H1 (cell line): ENCODE measurements at regions of chr11 and their contacts with region 1.

Region 1: GRCh38 chr11:45332276-45332934 is 46.3 kb upstream of the SYT13 start:
- DNase-seq: peak in 1 of 2 experiments; percentile 68
- H3K4me3 ChIP-seq: no peak overlapping the region
- H3K27ac ChIP-seq: no peak overlapping the region
- H3K4me1 ChIP-seq: no peaks in the 10 kb centered on the region
- H3K27me3 ChIP-seq: no peaks in the 10 kb centered on the region; a peak in 1 of 7 replicates
- CTCF ChIP-seq: peak; percentile 44 to 65 (median 49)
- EP300 ChIP-seq: no peak
- POLR2A ChIP-seq: no peak
- RAD21 ChIP-seq: peak; percentile 80 to 82

Region 2: DNA sequence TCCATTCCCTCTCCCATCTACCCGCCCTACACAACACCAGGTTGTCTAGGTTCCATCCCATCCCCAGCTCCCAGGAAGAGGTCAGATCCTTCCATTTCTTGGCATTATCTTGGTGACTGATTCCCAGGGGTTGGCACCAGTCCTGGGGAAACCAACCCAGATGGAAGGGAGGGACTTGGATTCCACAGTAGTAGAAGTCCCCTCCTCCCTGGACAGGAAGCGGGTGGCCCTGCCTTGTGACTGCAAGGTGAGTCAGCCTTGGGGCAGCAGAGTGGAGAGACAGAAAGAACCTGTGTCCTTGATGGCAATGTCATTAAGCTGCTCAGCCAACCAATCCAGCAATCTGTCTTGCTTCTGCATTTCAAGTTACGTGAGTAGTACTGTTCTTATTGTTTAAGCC is 72.8 kb before region 1 on chr11:
- CTCF ChIA-PET with region 1: interaction called, 29 read pairs
- POLR2A ChIA-PET with region 1: no interaction called
- DNase-seq: no peak
- H3K4me3 ChIP-seq: no peak overlapping the region
- H3K27ac ChIP-seq: no peak overlapping the region
- H3K4me1 ChIP-seq: no peaks in the 10 kb centered on the region; a peak in 1 of 7 replicates
- H3K27me3 ChIP-seq: no peaks in the 10 kb centered on the region
- CTCF ChIP-seq: no peak
- EP300 ChIP-seq: no peak
- POLR2A ChIP-seq: no peak
- RAD21 ChIP-seq: no peak

Region 3: GRCh38 chr11:45319077-45319476 is 13.3 kb before region 1 on chr11:
- CTCF ChIA-PET with region 1: interaction called, 23 read pairs
- POLR2A ChIA-PET with region 1: no interaction called
- DNase-seq: no peak
- H3K4me3 ChIP-seq: no peak overlapping the region
- H3K27ac ChIP-seq: no peak overlapping the region
- H3K4me1 ChIP-seq: no peaks in the 10 kb centered on the region; a peak in 1 of 7 replicates
- H3K27me3 ChIP-seq: peaks cover 0 to 2% (median 0%) of the 10 kb centered on the region in 4 experiments; a peak in 1 of 7 replicates
- CTCF ChIP-seq: no peak
- EP300 ChIP-seq: no peak
- POLR2A ChIP-seq: no peak
- RAD21 ChIP-seq: no peak

Region 4: GRCh38 chr11:45511361-45511965 is 179.1 kb after region 1 on chr11:
- CTCF ChIA-PET with region 1: no interaction called
- POLR2A ChIA-PET with region 1: no interaction called
- DNase-seq: no peak
- H3K4me3 ChIP-seq: no peak overlapping the region
- H3K27ac ChIP-seq: no peak overlapping the region
- H3K4me1 ChIP-seq: peaks cover 0 to 3% (median 0%) of the 10 kb centered on the region in 4 experiments; a peak in 1 of 7 replicates
- H3K27me3 ChIP-seq: no peaks in the 10 kb centered on the region; a peak in 1 of 7 replicates
- CTCF ChIP-seq: no peak
- EP300 ChIP-seq: no peak
- POLR2A ChIP-seq: no peak
- RAD21 ChIP-seq: no peak